Mammary epithelial cell (primary cell): ENCODE measurements at regions of chr5 and their contacts with region 1.

Region 1: DNA sequence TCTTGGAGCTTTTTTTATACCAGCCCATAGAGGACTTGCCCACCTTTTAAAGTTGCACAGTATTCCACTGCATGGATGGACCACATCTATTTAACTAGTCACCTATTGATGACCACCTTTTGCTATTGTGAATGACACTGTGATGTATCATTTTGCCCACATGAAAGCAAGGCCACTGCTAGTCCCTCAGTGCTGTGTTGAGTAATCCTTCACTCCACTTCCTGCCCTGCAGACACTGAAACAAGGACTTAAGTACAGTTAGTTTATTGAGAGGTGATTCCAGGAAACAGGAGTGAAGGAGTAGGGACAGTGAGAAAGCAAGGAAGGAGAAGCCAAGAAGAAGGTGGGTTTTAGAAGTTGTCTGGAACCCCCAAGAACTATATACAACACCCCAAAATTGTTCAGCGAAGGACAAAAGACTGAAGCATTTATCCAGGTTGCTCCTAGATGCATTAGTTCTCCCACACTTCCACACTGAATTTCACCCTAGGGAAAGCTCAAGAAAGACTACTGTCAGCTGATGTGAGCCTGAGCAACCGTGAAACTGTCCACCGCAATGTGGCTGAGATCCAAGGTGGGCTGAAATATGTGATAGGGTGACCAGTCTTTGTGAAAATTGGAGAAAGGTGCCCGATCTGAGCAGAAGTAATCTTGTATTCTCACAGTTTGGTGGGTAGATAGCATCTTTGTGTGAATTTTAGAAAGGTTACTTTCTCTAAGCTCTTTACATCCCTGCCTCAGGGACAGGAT is 45.2 kb upstream of the ANKRD31 start:
- DNase-seq: peak; percentile 56
- H3K4me3 ChIP-seq: no peak overlapping the region
- H3K27ac ChIP-seq: no peak overlapping the region
- H3K4me1 ChIP-seq: peaks cover 5% of the 10 kb centered on the region
- H3K27me3 ChIP-seq: no peaks in the 10 kb centered on the region
- CTCF ChIP-seq: no peak

Region 2: DNA sequence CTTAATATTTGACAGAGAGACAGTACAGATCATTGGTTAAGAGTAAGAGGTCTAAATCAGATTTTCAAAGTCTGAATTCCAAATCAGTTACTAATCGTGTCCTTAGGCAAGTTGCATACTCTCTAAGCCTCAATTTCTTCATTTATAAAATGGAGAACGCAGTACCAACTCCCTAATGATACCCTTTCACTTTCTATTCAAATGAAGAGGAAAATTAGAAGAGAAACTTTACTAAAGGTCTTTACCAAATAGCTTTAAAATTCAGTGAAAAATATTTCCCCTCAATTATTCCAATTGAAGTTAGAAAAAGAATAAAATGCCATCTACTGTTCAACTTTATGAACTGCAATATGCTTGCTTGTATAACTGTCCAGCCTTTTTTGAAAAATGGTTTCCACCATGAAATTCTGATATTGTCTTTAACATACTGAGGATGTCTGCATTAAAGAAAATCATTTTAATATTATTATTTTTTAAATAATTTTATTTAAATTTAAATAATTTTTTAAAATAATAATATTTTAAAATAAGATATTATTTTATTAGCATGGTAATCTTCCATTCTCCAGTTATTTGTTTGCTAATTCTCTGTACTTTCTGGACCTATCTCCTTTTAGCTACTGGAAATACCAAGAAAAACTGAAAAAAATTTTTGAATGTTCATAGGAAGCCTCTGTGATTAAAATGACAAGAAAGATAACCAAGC is 399.4 kb after region 1 on chr5:
- CTCF ChIA-PET with region 1: no interaction called
- dilution Hi-C with region 1: no loop called
- in situ Hi-C with region 1: no loop called
- intact Hi-C with region 1: loop called (anchors 5 kb)
- DNase-seq: peak; percentile 40
- H3K4me3 ChIP-seq: peak overlapping the region; percentile 33 to 52 (median 34)
- H3K27ac ChIP-seq: peak overlapping the region; percentile 22
- H3K4me1 ChIP-seq: peaks cover 6% of the 10 kb centered on the region
- H3K27me3 ChIP-seq: no peaks in the 10 kb centered on the region
- CTCF ChIP-seq: peak; percentile 58 to 61

Region 3: DNA sequence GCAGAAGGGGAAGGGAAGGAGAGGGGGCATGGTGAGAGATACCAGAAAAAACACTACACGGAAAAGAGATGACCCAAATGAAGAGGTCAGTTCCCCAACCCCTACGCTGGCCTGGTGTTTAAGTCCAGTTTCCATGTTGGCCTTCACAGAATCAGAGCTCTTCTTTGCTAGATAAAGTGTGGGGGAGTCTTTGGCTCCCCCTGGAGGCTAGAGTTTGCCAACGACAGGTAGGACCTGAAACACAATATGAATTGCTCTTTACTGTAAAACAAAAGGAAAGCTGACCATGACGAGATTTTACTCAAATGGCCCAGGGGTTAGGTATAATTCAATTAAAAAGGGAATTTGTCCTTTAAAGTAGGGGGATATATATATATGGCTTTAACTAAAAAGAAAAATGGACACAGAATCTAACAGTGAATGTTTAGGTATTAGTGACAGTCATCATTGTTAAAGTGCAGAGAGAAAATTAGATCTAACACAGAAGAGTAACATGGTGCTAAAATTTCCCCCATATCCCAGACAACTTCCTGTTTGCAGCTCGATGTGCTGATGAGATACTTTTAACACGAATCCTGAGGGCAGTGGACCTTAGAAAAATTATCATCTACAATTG is 893.3 kb after region 1 on chr5:
- CTCF ChIA-PET with region 1: no interaction called
- dilution Hi-C with region 1: no loop called
- in situ Hi-C with region 1: no loop called
- intact Hi-C with region 1: loop called (anchors 10 kb)
- DNase-seq: peak; percentile 34
- H3K4me3 ChIP-seq: no peak overlapping the region
- H3K27ac ChIP-seq: no peak overlapping the region
- H3K4me1 ChIP-seq: no peaks in the 10 kb centered on the region
- H3K27me3 ChIP-seq: no peaks in the 10 kb centered on the region
- CTCF ChIP-seq: peak; percentile 91 to 95

Region 4: GRCh38 chr5:76225336-76225735 is 943.4 kb after region 1 on chr5:
- CTCF ChIA-PET with region 1: no interaction called
- dilution Hi-C with region 1: no loop called
- in situ Hi-C with region 1: loop called in 1 of 2 experiments (anchors 25 kb)
- intact Hi-C with region 1: no loop called
- DNase-seq: no peak
- H3K4me3 ChIP-seq: no peak overlapping the region
- H3K27ac ChIP-seq: no peak overlapping the region
- H3K4me1 ChIP-seq: no peaks in the 10 kb centered on the region
- H3K27me3 ChIP-seq: no peaks in the 10 kb centered on the region
- CTCF ChIP-seq: no peak